ENCODE measurements at regions of chr5 and their contacts with region 1.

Region 1: DNA sequence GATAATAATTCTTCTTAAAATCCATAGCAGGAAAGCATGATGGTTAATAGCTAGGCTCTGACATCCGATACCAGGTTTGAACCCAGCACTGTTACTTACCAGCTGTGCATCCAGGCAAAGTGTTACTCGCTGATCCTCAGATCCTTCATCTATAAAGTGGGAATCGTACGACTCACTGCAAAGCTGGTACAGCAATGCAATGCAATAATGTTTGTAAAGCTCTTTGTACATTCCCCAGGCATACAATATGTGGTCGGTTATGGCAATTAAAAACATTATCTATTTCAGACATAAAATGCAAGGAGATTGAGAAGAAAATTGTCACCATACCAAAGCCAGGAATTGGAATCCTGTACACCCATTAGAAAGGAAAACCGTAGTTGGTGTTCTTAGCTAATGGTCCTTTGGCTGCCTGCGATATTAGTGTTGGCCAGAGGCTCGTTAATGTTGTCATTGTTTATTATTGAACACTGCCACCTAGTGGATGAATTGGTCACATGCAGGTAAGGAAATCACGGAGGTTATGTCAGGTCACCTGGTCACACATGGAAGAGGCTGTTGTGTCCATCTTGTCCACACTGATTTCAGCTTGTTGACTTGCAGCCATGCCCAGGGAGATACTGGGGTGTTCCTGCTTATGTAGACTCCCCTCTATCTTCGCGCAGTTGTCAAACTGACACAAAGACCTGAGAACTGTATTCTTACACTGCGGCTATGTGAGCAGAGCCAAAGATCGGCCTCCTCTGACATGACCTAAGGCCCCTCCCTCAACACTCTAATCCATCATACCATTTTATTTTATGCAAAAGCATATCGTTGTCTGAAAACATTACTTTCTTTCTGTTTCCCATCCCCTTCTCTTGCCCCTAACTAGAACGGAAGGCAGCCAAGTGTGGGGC is 87.5 kb upstream of the PPP2R2B start:
- DNase-seq: peak; percentile 5 to 68 (median 44)
- ATAC-seq: peak; percentile 87
- H3K4me3 ChIP-seq: no peak overlapping the region
- H3K4me3 Mint-ChIP-seq: no peak overlapping the region
- H3K27ac ChIP-seq: no peak overlapping the region
- H3K27ac Mint-ChIP-seq: peak overlapping the region in 1 of 9 donors; percentile 26
- H3K4me1 ChIP-seq: no peaks in the 10 kb centered on the region
- H3K4me1 Mint-ChIP-seq: no peaks in the 10 kb centered on the region
- H3K27me3 ChIP-seq: no peaks in the 10 kb centered on the region
- H3K27me3 Mint-ChIP-seq: peaks cover 0 to 4% (median 0%) of the 10 kb centered on the region in 5 donors

Region 2: GRCh38 chr5:146446853-146447733 is 518.9 kb before region 1 on chr5 and contains the start of gene TCERG1:
- CTCF ChIA-PET with region 1: no interaction called
- POLR2A ChIA-PET with region 1: no interaction called
- intact Hi-C with region 1: loop called in 1 of 2 experiments (anchors 1 kb)
- DNase-seq: peak; percentile 87 to 99 (median 98)
- ATAC-seq: peak; percentile 94
- H3K4me3 ChIP-seq: peak within 1 kb of the TSS; percentile 64
- H3K4me3 Mint-ChIP-seq: peak within 1 kb of the TSS; percentile 83 to 100 (median 99)
- H3K27ac ChIP-seq: peak within 1 kb of the TSS; percentile 96
- H3K27ac Mint-ChIP-seq: peak within 1 kb of the TSS; percentile 91 to 100 (median 97)
- H3K4me1 ChIP-seq: peaks cover 14 to 19% of the 10 kb centered on the region in 2 donors
- H3K4me1 Mint-ChIP-seq: peaks cover 24 to 51% (median 43%) of the 10 kb centered on the region in 7 donors
- H3K27me3 ChIP-seq: no peaks in the 10 kb centered on the region
- H3K27me3 Mint-ChIP-seq: peaks cover 0 to 10% (median 0%) of the 10 kb centered on the region in 5 donors
- total RNA-seq, gene TCERG1: 75.2 to 101 (median 83.8) TPM

Region 3: GRCh38 chr5:146541958-146542849 is 423.8 kb before region 1 on chr5:
- CTCF ChIA-PET with region 1: interaction called, 27 read pairs
- POLR2A ChIA-PET with region 1: no interaction called
- intact Hi-C with region 1: loop called (anchors 1 kb)
- DNase-seq: peak; percentile 23 to 72 (median 51)
- ATAC-seq: peak; percentile 86
- H3K4me3 ChIP-seq: no peak overlapping the region
- H3K4me3 Mint-ChIP-seq: no peak overlapping the region
- H3K27ac ChIP-seq: no peak overlapping the region
- H3K27ac Mint-ChIP-seq: no peak overlapping the region
- H3K4me1 ChIP-seq: no peaks in the 10 kb centered on the region
- H3K4me1 Mint-ChIP-seq: peaks cover 0 to 5% (median 0%) of the 10 kb centered on the region in 7 donors
- H3K27me3 ChIP-seq: no peaks in the 10 kb centered on the region
- H3K27me3 Mint-ChIP-seq: peaks cover 0 to 4% (median 0%) of the 10 kb centered on the region in 5 donors

Region 4: GRCh38 chr5:146662229-146662628 is 303.8 kb before region 1 on chr5:
- CTCF ChIA-PET with region 1: interaction called, 16 read pairs
- POLR2A ChIA-PET with region 1: no interaction called
- intact Hi-C with region 1: loop called (anchors 1 kb)
- DNase-seq: peak in 6 of 9 donors; percentile 2 to 53 (median 39)
- ATAC-seq: no peak
- H3K4me3 ChIP-seq: no peak overlapping the region
- H3K4me3 Mint-ChIP-seq: no peak overlapping the region
- H3K27ac ChIP-seq: no peak overlapping the region
- H3K27ac Mint-ChIP-seq: no peak overlapping the region
- H3K4me1 ChIP-seq: no peaks in the 10 kb centered on the region
- H3K4me1 Mint-ChIP-seq: peaks cover 0 to 16% (median 4%) of the 10 kb centered on the region in 7 donors
- H3K27me3 ChIP-seq: no peaks in the 10 kb centered on the region
- H3K27me3 Mint-ChIP-seq: peaks cover 0 to 1% (median 0%) of the 10 kb centered on the region in 5 donors

Region 5: GRCh38 chr5:147369742-147370374 is 403.8 kb after region 1 on chr5:
- CTCF ChIA-PET with region 1: no interaction called
- POLR2A ChIA-PET with region 1: no interaction called
- intact Hi-C with region 1: loop called in 1 of 2 experiments (anchors 2 kb)
- DNase-seq: no peak
- ATAC-seq: no peak
- H3K4me3 ChIP-seq: no peak overlapping the region
- H3K4me3 Mint-ChIP-seq: no peak overlapping the region
- H3K27ac ChIP-seq: no peak overlapping the region
- H3K27ac Mint-ChIP-seq: no peak overlapping the region
- H3K4me1 ChIP-seq: no peaks in the 10 kb centered on the region
- H3K4me1 Mint-ChIP-seq: no peaks in the 10 kb centered on the region
- H3K27me3 ChIP-seq: no peaks in the 10 kb centered on the region
- H3K27me3 Mint-ChIP-seq: peaks cover 0 to 7% (median 0%) of the 10 kb centered on the region in 5 donors

Measured in naive thymus-derived CD4-positive, alpha-beta T cell (primary cell).